ENCODE measurements at regions of chr9 and their contacts with region 1.

Region 1: DNA sequence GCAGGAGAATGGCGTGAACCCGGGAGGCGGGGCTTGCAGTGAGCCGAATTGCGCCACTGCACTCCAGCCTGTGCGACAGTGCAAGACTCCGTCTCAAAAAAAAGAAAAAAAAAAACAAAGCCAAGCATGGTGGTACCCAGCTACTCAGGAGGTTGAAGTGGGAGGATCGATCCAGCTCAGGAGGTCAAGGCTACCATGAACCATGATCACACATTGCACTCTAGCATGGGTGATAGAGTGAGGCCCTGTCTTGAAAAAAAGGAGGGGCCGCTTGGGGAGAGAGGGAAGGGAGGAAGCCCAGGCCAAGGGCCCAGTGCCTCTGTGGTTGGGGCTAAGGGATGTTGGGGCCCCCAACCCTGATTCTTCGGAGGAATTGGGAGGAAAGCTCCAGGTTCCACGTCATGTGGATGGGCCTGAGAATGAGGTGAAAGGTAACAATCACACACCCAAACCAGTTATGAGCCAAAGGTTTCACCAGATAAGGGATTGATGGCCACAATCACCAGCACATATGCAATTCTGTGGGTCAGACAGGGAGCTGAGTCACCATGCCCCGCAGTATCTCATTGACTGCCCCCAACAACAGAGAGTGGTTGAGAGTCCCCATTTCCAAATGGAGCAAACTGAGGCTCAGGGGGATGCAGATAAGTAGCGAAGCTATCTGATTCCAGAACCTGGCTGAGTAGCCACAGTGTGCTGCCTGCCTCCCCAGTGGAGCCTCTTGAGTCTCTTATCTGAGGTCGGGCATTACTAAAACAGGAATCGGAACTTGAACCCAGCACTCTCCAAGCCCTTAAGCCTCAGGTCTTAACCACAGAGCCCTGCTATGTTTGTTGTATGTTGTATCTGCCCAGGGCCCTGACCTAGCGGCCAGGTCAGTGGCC is 20.5 kb downstream of the SWI5 start:
- DNase-seq: peak in 1 of 2 experiments; percentile 71
- H3K4me3 ChIP-seq: no peak overlapping the region
- H3K4me3 Mint-ChIP-seq: no peak overlapping the region
- H3K27ac Mint-ChIP-seq: no peak overlapping the region
- H3K4me1 ChIP-seq: peaks cover 29% of the 10 kb centered on the region
- H3K4me1 Mint-ChIP-seq: peaks cover 13% of the 10 kb centered on the region
- H3K27me3 ChIP-seq: no peaks in the 10 kb centered on the region
- H3K27me3 Mint-ChIP-seq: no peaks in the 10 kb centered on the region
- CTCF ChIP-seq: no peak

Region 2: GRCh38 chr9:128275996-128276573 is 20.5 kb before region 1 on chr9 and contains the starts of genes GOLGA2 and SWI5:
- CTCF ChIA-PET with region 1: interaction called, 10 read pairs
- POLR2A ChIA-PET with region 1: interaction called, 4 read pairs
- intact Hi-C with region 1: no loop called
- DNase-seq: peak; percentile 99 to 100
- H3K4me3 ChIP-seq: peak within 1 kb of the TSS; percentile 88
- H3K4me3 Mint-ChIP-seq: peak within 1 kb of the TSS; percentile 98
- H3K27ac Mint-ChIP-seq: peak within 1 kb of the TSS; percentile 97
- H3K4me1 ChIP-seq: peaks cover 5% of the 10 kb centered on the region
- H3K4me1 Mint-ChIP-seq: peaks cover 30% of the 10 kb centered on the region
- H3K27me3 ChIP-seq: no peaks in the 10 kb centered on the region
- H3K27me3 Mint-ChIP-seq: peaks cover 2% of the 10 kb centered on the region
- CTCF ChIP-seq: no peak
- total RNA-seq, gene GOLGA2: 97.7 and 102 TPM in 2 replicates
- total RNA-seq, gene SWI5: 18.0 and 19.8 TPM in 2 replicates

Region 3: GRCh38 chr9:128361986-128362646 is 65.5 kb after region 1 on chr9:
- CTCF ChIA-PET with region 1: interaction called, 16 read pairs
- POLR2A ChIA-PET with region 1: no interaction called
- intact Hi-C with region 1: loop called (anchors 1 kb)
- DNase-seq: peak; percentile 82 to 85
- H3K4me3 ChIP-seq: peak overlapping the region; percentile 34
- H3K4me3 Mint-ChIP-seq: peak overlapping the region; percentile 81
- H3K27ac Mint-ChIP-seq: peak overlapping the region; percentile 83
- H3K4me1 ChIP-seq: peaks cover 8% of the 10 kb centered on the region; the same call in 1 of the 2 replicates
- H3K4me1 Mint-ChIP-seq: peaks cover 7% of the 10 kb centered on the region
- H3K27me3 ChIP-seq: no peaks in the 10 kb centered on the region
- H3K27me3 Mint-ChIP-seq: no peaks in the 10 kb centered on the region
- CTCF ChIP-seq: peak; percentile 82 to 89

Region 4: DNA sequence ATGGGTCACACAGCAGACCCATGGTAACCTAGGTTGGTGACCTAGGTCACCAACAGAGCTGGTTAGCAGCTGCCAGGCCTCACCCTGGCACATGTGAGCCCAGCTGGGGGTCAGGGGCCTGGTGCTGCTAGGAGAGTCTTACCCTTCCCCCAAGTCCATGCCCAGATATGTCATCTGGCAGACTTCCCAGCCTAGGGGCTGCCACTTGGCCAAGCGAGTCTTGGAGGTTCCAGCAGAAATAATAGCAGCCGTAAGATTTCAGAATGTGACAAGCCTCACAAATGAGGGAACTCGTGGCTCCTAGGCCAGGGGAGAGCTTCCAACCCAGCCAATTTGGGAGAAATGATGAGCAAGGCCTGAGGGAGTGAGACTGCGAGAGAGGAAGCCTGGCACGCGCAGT is 85.7 kb after region 1 on chr9:
- CTCF ChIA-PET with region 1: no interaction called
- POLR2A ChIA-PET with region 1: no interaction called
- intact Hi-C with region 1: no loop called
- DNase-seq: no peak
- H3K4me3 ChIP-seq: no peak overlapping the region
- H3K4me3 Mint-ChIP-seq: no peak overlapping the region
- H3K27ac Mint-ChIP-seq: no peak overlapping the region
- H3K4me1 ChIP-seq: no peaks in the 10 kb centered on the region
- H3K4me1 Mint-ChIP-seq: no peaks in the 10 kb centered on the region
- H3K27me3 ChIP-seq: no peaks in the 10 kb centered on the region
- H3K27me3 Mint-ChIP-seq: no peaks in the 10 kb centered on the region
- CTCF ChIP-seq: no peak

Region 5: GRCh38 chr9:128412120-128412790 is 115.7 kb after region 1 on chr9:
- CTCF ChIA-PET with region 1: interaction called, 5 read pairs
- POLR2A ChIA-PET with region 1: no interaction called
- intact Hi-C with region 1: loop called (anchors 2 kb)
- DNase-seq: peak; percentile 82 to 85
- H3K4me3 ChIP-seq: no peak overlapping the region
- H3K4me3 Mint-ChIP-seq: no peak overlapping the region
- H3K27ac Mint-ChIP-seq: no peak overlapping the region
- H3K4me1 ChIP-seq: peaks cover 17% of the 10 kb centered on the region
- H3K4me1 Mint-ChIP-seq: peaks cover 24% of the 10 kb centered on the region
- H3K27me3 ChIP-seq: no peaks in the 10 kb centered on the region
- H3K27me3 Mint-ChIP-seq: no peaks in the 10 kb centered on the region
- CTCF ChIP-seq: peak; percentile 61 to 70

Region 6: DNA sequence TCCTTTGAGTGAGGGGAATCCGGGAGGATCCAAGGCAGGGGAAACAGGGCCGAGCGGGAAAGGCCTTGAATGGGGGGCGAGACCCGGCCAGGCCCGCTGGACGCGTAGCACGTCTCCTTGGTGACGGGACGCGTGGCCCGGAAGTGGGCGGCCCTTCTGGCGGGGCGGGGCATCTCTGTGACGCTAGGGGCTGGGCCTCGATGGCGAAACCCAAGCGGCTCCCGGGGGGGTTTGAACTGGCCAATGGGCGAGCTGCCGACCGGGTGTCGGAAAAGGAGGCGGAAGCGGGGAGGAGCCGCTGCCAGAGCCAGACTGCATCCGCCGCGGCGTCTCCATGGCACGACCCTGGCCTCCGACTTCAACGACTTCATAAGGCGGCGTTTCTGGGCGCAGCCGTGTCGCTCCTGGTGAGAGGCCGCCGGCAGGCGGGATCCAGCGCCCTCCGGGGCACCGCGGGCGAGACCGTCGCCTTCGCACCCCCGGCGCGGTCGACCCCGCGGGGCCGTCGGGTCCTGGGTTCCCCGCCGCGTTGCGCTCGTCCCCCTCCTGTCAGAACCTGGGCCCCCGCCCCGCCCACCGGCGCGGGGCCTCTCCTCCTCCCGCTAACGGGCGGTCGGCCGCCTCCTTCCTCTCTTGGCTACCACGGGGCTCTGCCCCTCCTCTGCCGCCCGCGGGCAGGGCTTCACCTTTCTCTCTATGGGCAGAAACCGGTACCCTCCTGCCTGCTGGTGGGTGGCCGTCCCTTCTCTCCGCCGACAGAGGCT is 159.5 kb after region 1 on chr9 and contains the start of gene ODF2:
- CTCF ChIA-PET with region 1: no interaction called
- POLR2A ChIA-PET with region 1: no interaction called
- intact Hi-C with region 1: loop called (anchors 5 kb)
- DNase-seq: peak; percentile 98 to 99
- H3K4me3 ChIP-seq: peak within 1 kb of the TSS; percentile 93
- H3K4me3 Mint-ChIP-seq: peak within 1 kb of the TSS; percentile 100
- H3K27ac Mint-ChIP-seq: peak within 1 kb of the TSS; percentile 94
- H3K4me1 ChIP-seq: 0 out of 2 replicates have a peak, but pooled peaks cover 6% of the 10 kb centered on the region
- H3K4me1 Mint-ChIP-seq: peaks cover 7% of the 10 kb centered on the region
- H3K27me3 ChIP-seq: no peaks in the 10 kb centered on the region
- H3K27me3 Mint-ChIP-seq: peaks cover 3% of the 10 kb centered on the region
- CTCF ChIP-seq: no peak
- total RNA-seq, gene ODF2: 34.6 and 34.9 TPM in 2 replicates